Astrocyte of the cerebellum (primary cell): ENCODE measurements at regions of chr18 and their contacts with region 1.

Region 1: DNA sequence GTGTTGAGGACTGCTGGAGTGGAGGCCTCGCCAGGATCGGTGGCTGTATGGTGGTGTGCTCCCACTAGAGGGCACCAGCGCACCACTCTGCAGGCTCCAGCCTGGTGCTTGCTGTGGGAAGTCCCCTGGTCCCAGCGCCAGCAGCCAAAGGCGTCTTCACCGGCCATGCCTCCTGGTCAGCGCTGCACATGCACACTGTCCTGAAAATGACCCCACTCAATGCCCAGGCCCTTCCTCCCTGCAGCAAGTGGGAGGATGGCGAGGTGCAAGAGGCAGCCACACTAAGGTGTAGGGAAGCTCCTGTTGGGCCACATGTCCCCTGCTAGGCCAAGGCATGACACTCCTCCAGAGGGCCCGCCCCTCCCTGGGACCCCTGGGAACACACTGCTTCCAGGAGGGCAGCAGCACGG is 136.5 kb downstream of the CTIF start:
- DNase-seq: peak; percentile 57
- H3K4me3 ChIP-seq: no peak overlapping the region
- CTCF ChIP-seq: peak; percentile 88

Region 2: DNA sequence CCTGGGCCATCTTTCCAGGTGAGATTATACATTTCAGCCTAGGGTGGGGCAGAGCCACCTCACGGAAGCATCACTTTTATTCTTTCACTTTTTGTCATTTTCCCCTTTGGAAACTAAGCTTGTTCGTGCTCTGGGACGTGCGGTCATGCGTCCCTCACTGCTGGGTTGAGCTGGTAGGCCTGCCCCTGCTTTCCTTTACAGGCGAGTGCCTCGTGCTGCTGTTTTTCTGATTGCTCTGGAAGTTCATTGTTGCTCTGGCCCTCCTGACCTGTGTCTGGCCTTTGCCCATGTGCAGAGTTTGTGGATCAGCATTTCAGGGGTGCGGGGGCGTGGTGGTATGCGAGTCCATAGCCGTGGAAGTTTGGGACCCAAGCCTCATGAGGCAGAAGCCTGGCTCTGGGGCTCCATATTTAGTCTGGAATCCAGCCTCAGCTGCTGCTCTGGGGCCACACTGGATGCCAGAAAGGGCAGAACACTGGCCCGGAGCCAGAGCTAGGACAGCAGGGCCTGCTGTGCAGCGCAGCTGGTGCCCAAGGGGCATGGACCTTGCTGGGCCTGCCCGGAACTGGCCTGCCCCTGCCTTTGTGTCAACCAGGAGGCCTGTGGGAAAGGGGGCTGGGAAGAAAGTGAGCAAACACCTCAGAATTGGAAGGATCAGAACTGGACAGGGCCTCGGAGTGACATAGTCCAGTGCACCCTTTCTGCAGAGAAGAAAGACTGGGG is 85.4 kb before region 1 on chr18:
- in situ Hi-C with region 1: no loop called
- DNase-seq: no peak
- H3K4me3 ChIP-seq: no peak overlapping the region
- CTCF ChIP-seq: no peak

Region 3: GRCh38 chr18:49041435-49042245 is 366.3 kb after region 1 on chr18:
- in situ Hi-C with region 1: loop called (anchors 25 kb)
- DNase-seq: peak; percentile 55
- H3K4me3 ChIP-seq: no peak overlapping the region
- CTCF ChIP-seq: peak; percentile 76

Region 4: GRCh38 chr18:49178736-49179135 is 503.4 kb after region 1 on chr18:
- in situ Hi-C with region 1: loop called (anchors 25 kb)
- DNase-seq: no peak
- H3K4me3 ChIP-seq: no peak overlapping the region
- CTCF ChIP-seq: peak; percentile 64